GM23248 (cell line): ENCODE measurements at regions of chr3 and their contacts with region 1.

Region 1: GRCh38 chr3:45043728-45044299 is 17.7 kb downstream of the CLEC3B start:
- DNase-seq: peak; percentile 93
- H3K4me3 ChIP-seq: no peak overlapping the region
- H3K27ac ChIP-seq: peak overlapping the region; percentile 66
- H3K4me1 ChIP-seq: peaks cover 20% of the 10 kb centered on the region
- H3K27me3 ChIP-seq: no peaks in the 10 kb centered on the region

Region 2: DNA sequence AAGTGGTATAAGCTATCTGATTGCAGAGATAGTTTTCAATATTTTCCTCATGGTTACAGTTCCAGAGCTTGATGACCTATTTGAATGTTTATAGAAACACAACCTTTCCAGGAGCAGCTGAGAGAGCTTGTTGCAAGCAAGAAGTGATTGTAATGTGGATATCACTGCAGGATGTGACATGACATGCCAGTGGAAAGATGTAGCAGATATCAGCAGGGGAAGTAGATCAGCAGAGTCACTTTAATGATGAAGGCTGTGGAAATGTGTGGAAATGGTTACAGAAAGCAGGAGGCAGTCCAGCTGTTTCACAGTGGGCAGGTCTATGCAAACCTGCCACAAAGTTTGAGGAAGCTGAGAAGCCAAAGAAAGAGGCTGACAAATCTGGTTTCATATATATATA is 161.3 kb after region 1 on chr3:
- in situ Hi-C with region 1: loop called (anchors 5 kb)
- DNase-seq: peak; percentile 23
- H3K4me3 ChIP-seq: no peak overlapping the region
- H3K27ac ChIP-seq: no peak overlapping the region
- H3K4me1 ChIP-seq: peaks cover 18% of the 10 kb centered on the region
- H3K27me3 ChIP-seq: no peaks in the 10 kb centered on the region

Region 3: DNA sequence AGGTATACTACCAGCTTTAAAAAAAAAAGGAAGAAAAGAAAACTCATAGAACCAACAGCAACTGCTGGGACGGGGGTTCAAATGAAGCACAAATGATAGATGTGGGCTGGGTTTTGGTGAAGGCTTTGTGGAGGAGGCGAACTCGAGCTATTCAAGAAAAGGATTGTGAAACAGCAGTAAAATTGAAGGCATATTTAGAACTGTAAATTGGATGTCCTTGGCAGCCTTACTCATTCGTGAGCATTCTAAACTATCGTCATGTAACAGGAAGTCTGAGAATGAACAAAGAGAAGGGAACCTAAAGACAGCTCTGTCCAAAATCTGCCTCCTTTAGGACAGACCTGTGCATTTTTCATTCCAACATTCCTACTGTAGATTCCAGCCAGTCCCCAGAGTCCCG is 442.3 kb after region 1 on chr3:
- in situ Hi-C with region 1: loop called (anchors 5 kb)
- DNase-seq: peak; percentile 88
- H3K4me3 ChIP-seq: peak overlapping the region; percentile 34; the same call in 1 of the 2 replicates
- H3K27ac ChIP-seq: peak overlapping the region; percentile 66
- H3K4me1 ChIP-seq: peaks cover 28% of the 10 kb centered on the region
- H3K27me3 ChIP-seq: no peaks in the 10 kb centered on the region